ENCODE measurements at regions of chr2 and their contacts with region 1.

Region 1: DNA sequence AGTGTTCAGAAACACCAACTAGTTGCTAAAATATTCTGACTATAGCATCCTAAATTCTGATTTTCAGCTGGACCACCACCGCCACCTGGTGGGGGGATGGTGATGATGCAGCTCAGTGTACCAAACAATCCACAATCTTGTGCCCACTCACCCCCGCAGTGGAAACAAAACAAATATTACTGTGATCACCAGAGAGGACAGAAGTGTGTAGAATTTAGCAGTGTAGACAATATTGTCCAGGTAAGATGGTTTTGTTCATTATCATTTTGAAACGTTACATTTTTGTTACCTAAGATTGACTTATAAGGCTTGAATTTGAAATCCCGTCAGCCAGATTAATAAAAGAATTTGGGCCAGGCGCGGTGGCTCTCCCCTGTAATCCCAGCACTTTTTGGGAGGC is 31.7 kb upstream of the UBXN4 start:
- DNase-seq: peak; percentile 82
- H3K4me3 ChIP-seq: no peak overlapping the region
- H3K27ac ChIP-seq: no peak overlapping the region
- H3K4me1 ChIP-seq: no peaks in the 10 kb centered on the region
- H3K27me3 ChIP-seq: no peaks in the 10 kb centered on the region
- CTCF ChIP-seq: peak; percentile 75 to 92 (median 88)
- POLR2A ChIP-seq: no peak

Region 2: GRCh38 chr2:135004005-135004746 is 705.8 kb before region 1 on chr2:
- intact Hi-C with region 1: loop called (anchors 2 kb)
- DNase-seq: peak; percentile 90
- H3K4me3 ChIP-seq: no peak overlapping the region
- H3K27ac ChIP-seq: no peak overlapping the region
- H3K4me1 ChIP-seq: peaks cover 0 to 9% (median 6%) of the 10 kb centered on the region in 6 donors
- H3K27me3 ChIP-seq: peaks cover 0 to 44% (median 12%) of the 10 kb centered on the region in 7 donors
- CTCF ChIP-seq: peak; percentile 51 to 91 (median 80)
- POLR2A ChIP-seq: no peak

Region 3: GRCh38 chr2:135475128-135475527 is 234.9 kb before region 1 on chr2:
- intact Hi-C with region 1: loop called (anchors 5 kb)
- DNase-seq: no peak
- H3K4me3 ChIP-seq: no peak overlapping the region
- H3K27ac ChIP-seq: no peak overlapping the region
- H3K4me1 ChIP-seq: no peaks in the 10 kb centered on the region
- H3K27me3 ChIP-seq: no peaks in the 10 kb centered on the region
- CTCF ChIP-seq: no peak
- POLR2A ChIP-seq: no peak